ENCODE measurements at regions of chr3 and their contacts with region 1.

Region 1: DNA sequence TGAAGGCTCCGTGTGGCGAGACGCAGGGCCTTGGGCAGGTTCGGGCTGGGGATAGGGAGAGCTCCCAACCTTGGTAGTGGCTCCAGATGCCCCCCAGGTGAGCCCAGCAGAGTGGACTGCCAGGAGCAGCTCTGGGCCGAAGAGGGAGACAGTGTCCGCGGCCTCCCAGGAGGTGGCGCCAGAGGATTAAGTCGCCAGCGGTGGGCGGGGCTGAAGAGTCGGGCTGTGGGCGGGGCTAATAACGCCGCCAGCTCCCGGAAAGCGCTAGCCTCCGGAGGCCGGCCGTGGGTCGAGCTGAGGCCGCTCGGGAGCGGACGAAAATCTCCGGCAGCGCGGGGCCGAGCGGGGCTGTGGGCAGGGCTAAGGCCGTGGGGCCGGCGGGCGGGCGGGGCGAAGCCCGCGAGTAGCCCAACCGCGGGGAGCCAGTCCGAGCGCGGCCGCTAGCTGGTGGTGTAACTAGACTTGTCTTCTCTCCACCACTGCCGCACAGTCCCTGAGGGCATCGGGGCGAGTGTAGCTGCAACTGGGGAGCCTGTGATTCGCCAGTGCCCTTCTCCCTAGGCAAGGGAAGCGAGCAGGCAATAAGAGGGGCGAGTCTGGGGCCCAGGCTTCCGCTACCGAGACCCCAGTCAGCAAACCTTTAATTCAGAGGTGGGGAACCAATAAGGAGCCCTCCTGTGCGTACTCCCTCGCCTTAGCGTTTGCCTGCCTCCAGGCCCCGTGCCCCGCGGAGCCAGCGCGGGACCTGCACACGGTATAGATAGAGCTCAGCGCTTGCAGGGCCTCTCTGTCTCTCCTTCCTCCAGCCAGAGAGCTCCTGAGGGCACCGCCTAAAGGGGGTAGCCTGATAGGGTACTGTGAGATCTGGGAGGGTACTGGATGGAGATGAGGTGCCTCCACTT is 14.4 kb upstream of the BSN start:
- DNase-seq: peak; percentile 88
- H3K4me3 ChIP-seq: peak overlapping the region; percentile 62
- H3K27ac ChIP-seq: peak overlapping the region; percentile 65
- H3K27me3 ChIP-seq: peaks cover 8% of the 10 kb centered on the region
- CTCF ChIP-seq: peak; percentile 80

Region 2: GRCh38 chr3:49238274-49239127 is 301.4 kb before region 1 on chr3:
- CTCF ChIA-PET with region 1: no interaction called
- POLR2A ChIA-PET with region 1: no interaction called
- DNase-seq: no peak
- H3K4me3 ChIP-seq: no peak overlapping the region
- H3K27ac ChIP-seq: peak overlapping the region; percentile 70
- H3K27me3 ChIP-seq: no peaks in the 10 kb centered on the region
- CTCF ChIP-seq: no peak

Region 3: GRCh38 chr3:49500732-49501609 is 38.9 kb before region 1 on chr3:
- CTCF ChIA-PET with region 1: interaction called, 11 read pairs
- POLR2A ChIA-PET with region 1: no interaction called
- DNase-seq: peak; percentile 87
- H3K4me3 ChIP-seq: peak overlapping the region; percentile 13; the same call in 1 of the 2 replicates
- H3K27ac ChIP-seq: peak overlapping the region; percentile 87
- H3K27me3 ChIP-seq: no peaks in the 10 kb centered on the region
- CTCF ChIP-seq: no peak

Region 4: GRCh38 chr3:49553692-49554632 is 14.1 kb after region 1 on chr3 and contains the start of gene BSN:
- CTCF ChIA-PET with region 1: interaction called, 22 read pairs
- POLR2A ChIA-PET with region 1: no interaction called
- DNase-seq: peak; percentile 73
- H3K4me3 ChIP-seq: peak within 1 kb of the TSS; percentile 80
- H3K27ac ChIP-seq: peak within 1 kb of the TSS; percentile 39
- H3K27me3 ChIP-seq: peaks cover 21% of the 10 kb centered on the region
- CTCF ChIP-seq: no peak
- polyA plus RNA-seq, gene BSN: 0.01 TPM in 1 of 2 replicates, not detected in the other

Region 5: GRCh38 chr3:49673715-49674496 is 134.0 kb after region 1 on chr3 and contains the start of gene APEH:
- CTCF ChIA-PET with region 1: interaction called, 208 read pairs
- POLR2A ChIA-PET with region 1: interaction called, 11 read pairs
- DNase-seq: peak; percentile 93
- H3K4me3 ChIP-seq: peak within 1 kb of the TSS; percentile 81
- H3K27ac ChIP-seq: peak within 1 kb of the TSS; percentile 97
- H3K27me3 ChIP-seq: no peaks in the 10 kb centered on the region
- CTCF ChIP-seq: no peak
- polyA plus RNA-seq, gene APEH: 85.3 and 108 TPM in 2 replicates